RWPE1 (cell line): ENCODE measurements at regions of chr1 and their contacts with region 1.

Region 1: GRCh38 chr1:201559679-201560162 is 20.8 kb downstream of the NAV1 start:
- DNase-seq: peak; percentile 96
- H3K27ac ChIP-seq: peak overlapping the region; percentile 55; the same call in 1 of the 2 replicates
- CTCF ChIP-seq: peak; percentile 88

Region 2: GRCh38 chr1:201072158-201072557 is 487.6 kb before region 1 on chr1:
- CTCF ChIA-PET with region 1: no interaction called
- POLR2A ChIA-PET with region 1: no interaction called
- DNase-seq: peak; percentile 86
- H3K27ac ChIP-seq: no peak overlapping the region
- CTCF ChIP-seq: no peak

Region 3: GRCh38 chr1:201530741-201531531 is 28.8 kb before region 1 on chr1:
- CTCF ChIA-PET with region 1: interaction called, 12 read pairs
- POLR2A ChIA-PET with region 1: no interaction called
- DNase-seq: peak; percentile 78
- H3K27ac ChIP-seq: no peak overlapping the region
- CTCF ChIP-seq: peak; percentile 84

Region 4: GRCh38 chr1:201625226-201625761 is 65.6 kb after region 1 on chr1:
- CTCF ChIA-PET with region 1: interaction called, 5 read pairs
- POLR2A ChIA-PET with region 1: interaction called, 13 read pairs
- DNase-seq: no peak
- H3K27ac ChIP-seq: no peak overlapping the region
- CTCF ChIP-seq: no peak

Region 5: DNA sequence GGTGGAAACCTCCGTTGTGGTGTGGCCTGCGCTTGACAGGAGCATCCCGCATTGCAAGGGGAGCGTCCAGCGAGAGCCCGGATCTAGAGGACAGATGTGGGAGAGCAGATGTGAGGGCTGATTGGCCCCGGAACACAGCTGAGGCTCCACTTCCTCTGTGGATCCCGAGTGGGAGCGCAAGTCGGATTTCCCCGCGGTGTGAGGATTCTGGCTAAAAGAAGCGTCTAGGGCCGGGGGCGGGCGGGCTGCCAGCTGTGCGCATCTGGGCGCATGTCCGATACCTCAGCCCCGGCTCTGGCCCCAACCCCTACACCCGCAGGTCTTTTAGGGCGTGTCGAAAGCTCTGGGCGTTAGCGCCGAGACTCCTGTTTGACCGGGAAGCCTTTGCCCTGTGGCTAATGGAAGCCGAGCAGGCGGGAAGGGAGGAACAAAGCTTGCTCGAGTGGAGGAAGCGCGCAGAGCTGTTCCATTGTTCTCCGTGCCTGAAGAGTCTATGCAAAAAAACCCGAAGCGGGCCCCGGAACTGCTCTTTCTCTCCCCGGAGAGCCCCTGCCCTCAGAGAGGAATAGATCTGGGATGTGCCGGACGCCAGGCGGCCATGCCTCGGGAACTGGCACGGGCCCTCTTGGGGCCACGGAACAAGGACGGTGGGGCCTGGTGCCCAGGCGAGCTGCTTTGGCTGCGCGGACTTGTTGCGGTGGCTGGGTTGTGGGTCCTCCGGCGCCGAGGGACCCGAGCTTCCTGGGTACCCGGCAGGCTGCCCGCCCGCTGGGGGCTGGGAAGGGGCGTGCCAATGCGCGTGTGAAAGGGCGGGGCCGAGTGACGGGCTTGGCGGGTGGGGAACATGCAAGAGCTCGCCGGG is 90.3 kb after region 1 on chr1:
- CTCF ChIA-PET with region 1: interaction called, 13 read pairs
- POLR2A ChIA-PET with region 1: no interaction called
- DNase-seq: peak; percentile 87
- H3K27ac ChIP-seq: peak overlapping the region; percentile 97
- CTCF ChIP-seq: no peak

Region 6: DNA sequence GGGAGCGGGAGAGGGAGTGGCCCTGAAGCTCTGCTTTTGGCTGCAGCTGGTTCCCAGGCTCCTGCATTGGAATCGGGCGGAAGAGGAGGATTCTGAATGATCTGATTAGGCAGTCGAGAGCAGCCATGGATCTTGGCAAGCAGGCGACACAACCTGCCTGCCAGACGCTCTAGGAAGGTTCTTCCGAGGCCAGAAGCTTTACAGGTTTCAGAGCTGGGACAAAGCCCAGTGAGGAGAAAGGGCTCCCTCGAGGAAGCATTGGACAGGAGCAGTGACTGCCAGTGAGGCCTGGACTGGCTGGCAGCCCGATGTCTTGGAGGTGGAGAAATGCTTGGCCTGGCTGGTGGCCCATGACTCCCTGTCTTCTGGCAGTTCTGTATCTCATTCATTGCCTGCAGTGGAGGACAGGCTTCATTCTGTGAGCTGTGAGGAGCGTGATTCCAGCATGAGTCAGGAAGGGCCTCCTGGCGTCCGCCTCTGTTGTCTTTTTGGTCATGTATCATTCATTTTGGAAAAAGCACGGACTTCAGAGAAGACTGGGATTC is 136.6 kb after region 1 on chr1:
- CTCF ChIA-PET with region 1: interaction called, 18 read pairs
- POLR2A ChIA-PET with region 1: no interaction called
- DNase-seq: peak; percentile 88
- H3K27ac ChIP-seq: peak overlapping the region; percentile 93
- CTCF ChIP-seq: no peak

Region 7: GRCh38 chr1:201703621-201704439 is 144.1 kb after region 1 on chr1:
- CTCF ChIA-PET with region 1: interaction called, 84 read pairs
- POLR2A ChIA-PET with region 1: no interaction called
- DNase-seq: peak; percentile 91
- H3K27ac ChIP-seq: peak overlapping the region; percentile 90
- CTCF ChIP-seq: peak; percentile 96

Region 8: GRCh38 chr1:201709564-201710295 is 150.0 kb after region 1 on chr1:
- CTCF ChIA-PET with region 1: interaction called, 84 read pairs
- POLR2A ChIA-PET with region 1: no interaction called
- DNase-seq: peak; percentile 79
- H3K27ac ChIP-seq: peak overlapping the region; percentile 96
- CTCF ChIP-seq: peak; percentile 83